Activated naive CD4-positive, alpha-beta T cell treated with anti-CD3 and anti-CD28 coated beads for 36 hours (primary cell): ENCODE measurements at regions of chr2 and their contacts with region 1.

Region 1: DNA sequence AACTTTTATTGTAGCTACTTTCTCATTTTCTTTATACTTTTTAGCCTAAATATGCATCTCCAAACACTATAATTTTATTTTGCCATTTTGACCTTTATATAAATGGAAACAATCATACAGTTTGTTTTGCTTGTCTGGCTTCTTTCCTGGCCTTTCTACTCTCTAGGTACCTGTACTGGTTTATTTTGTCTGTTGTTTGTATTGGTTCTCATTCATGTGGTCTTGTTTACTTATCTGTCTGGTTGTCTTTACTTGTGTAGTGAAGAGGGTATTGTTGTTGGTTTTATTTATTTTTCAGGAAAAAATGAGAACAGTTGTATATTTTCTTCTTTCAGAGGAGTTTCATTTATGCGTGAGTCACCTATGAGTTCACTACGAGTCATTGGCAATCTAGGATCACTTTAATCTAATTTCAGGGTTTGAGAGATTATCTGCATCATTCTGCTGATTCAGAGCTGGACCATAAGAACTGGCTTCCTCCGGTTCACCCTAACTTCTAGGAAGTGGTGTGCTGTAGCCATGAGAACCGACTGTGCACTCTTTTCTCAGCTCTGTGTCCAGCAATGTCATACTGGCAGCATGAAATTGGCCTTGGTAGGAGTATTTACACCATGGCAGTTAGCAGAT is 33.1 kb upstream of the HDAC4 start:
- DNase-seq: peak; percentile 43
- H3K4me3 Mint-ChIP-seq: no peak overlapping the region
- H3K27ac Mint-ChIP-seq: no peak overlapping the region
- H3K4me1 Mint-ChIP-seq: peaks cover 11% of the 10 kb centered on the region
- H3K27me3 Mint-ChIP-seq: peaks cover 5% of the 10 kb centered on the region

Region 2: GRCh38 chr2:239411549-239412319 is 22.2 kb before region 1 on chr2:
- CTCF ChIA-PET with region 1: no interaction called
- intact Hi-C with region 1: no loop called
- DNase-seq: no peak
- H3K4me3 Mint-ChIP-seq: no peak overlapping the region
- H3K27ac Mint-ChIP-seq: no peak overlapping the region
- H3K4me1 Mint-ChIP-seq: peaks cover 10% of the 10 kb centered on the region
- H3K27me3 Mint-ChIP-seq: no peaks in the 10 kb centered on the region

Region 3: DNA sequence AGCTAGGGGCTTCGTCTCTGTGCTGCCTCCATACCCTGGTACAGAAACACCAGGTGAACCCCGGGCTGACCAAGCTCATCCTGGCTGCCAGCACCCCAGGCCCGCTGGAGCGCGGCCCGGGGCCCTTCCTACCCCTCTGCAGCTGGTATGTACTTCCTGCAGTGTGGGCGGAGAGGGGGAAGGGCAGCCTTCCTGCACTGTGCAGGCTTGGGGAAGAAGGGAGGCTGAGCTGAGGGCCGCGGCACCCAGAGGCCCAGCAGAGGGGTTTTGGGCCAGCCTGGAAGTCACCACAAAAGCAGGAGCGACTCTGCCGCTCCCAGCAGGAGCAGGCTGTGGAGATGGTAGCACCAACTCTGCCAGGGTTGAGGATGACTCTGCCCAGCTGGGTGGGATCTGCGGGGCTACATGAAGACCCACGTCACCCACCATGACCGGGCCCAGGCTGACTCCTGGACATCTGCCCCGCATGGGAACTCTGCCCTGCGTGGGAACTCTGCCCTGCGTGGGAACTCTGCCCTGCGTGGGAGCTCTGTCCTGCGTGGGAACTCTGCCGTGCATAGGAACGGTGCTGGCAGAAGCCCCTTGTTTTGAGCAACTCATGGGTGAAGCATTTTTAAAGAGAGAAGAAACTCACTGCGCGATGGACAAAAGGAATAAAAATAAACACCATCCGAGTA is 317.9 kb after region 1 on chr2:
- CTCF ChIA-PET with region 1: no interaction called
- intact Hi-C with region 1: loop called (anchors 5 kb)
- DNase-seq: peak; percentile 80
- H3K4me3 Mint-ChIP-seq: no peak overlapping the region
- H3K27ac Mint-ChIP-seq: no peak overlapping the region
- H3K4me1 Mint-ChIP-seq: peaks cover 17% of the 10 kb centered on the region
- H3K27me3 Mint-ChIP-seq: no peaks in the 10 kb centered on the region